ENCODE measurements at regions of chr1 and their contacts with region 1.

Region 1: GRCh38 chr1:209899948-209900347 is 38.1 kb upstream of the SYT14 start:
- DNase-seq: no peak
- H3K4me3 ChIP-seq: no peak overlapping the region
- H3K27ac ChIP-seq: peak overlapping the region; percentile 84
- H3K4me1 ChIP-seq: peaks cover 44% of the 10 kb centered on the region
- H3K27me3 ChIP-seq: no peaks in the 10 kb centered on the region
- CTCF ChIP-seq: peak; percentile 48; the same call in 1 of the 2 replicates

Region 2: DNA sequence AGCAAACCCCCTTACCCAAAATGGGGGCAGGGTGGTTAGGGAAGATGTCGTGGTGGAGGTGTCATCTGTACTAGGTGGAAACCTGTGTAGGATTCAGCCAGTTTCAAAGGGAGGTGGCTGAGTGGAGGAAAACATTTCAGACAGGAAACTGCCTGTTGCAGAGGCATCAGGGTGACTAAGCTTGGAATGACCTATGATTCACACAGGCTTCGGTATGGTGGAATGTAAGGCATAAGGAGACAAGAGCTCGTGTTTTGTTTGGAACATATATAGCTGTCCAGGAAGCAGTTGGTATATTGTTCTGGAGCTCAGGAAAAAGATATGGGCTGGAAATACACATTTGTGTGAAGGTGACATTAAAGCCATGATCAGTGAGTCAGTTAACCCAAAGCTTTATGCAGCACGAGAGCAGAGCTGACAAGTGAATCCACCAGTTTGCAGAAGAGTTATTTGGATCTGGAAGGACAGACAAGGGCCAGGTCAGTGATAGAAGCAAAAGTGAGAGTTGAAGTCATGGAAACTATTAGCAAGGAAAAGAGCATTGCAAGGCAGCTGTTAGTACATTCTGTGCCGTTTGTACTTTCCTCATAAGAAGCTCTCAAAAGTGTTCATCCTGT is 60.0 kb before region 1 on chr1:
- CTCF ChIA-PET with region 1: no interaction called
- POLR2A ChIA-PET with region 1: no interaction called
- intact Hi-C with region 1: loop called (anchors 1 kb)
- DNase-seq: peak; percentile 60 to 92
- H3K4me3 ChIP-seq: peak overlapping the region; percentile 34; the same call in 1 of the 2 replicates
- H3K27ac ChIP-seq: peak overlapping the region; percentile 91
- H3K4me1 ChIP-seq: peaks cover 26% of the 10 kb centered on the region
- H3K27me3 ChIP-seq: no peaks in the 10 kb centered on the region
- CTCF ChIP-seq: no peak

Region 3: DNA sequence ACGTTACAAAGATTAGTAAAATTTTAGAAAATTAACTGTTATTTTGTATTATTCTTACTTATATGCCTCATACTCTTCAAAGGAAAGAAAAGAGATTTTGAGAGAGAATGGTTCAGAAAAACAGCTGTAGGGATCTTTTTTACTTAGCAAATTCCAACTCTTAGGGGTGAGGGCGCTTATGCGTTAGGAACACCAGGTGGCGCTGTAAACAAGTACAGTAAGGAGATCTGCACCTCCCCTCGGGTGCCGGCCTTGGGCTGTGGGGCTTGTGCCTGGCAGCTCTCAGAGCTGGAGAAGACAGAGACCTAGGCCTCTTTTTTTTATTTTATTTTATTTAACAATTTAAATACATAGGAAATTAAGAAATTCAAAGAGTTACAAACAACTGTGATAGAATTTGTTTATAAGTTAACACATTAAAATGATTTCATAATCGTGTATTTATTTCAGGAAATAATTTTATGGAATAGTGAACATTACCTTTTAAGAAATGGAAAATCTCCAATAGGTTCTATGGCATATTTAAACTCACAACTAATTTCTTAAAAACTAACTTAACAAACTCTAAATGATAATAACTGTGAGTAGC is 39.6 kb before region 1 on chr1:
- CTCF ChIA-PET with region 1: interaction called, 3 read pairs
- POLR2A ChIA-PET with region 1: interaction called, 5 read pairs
- intact Hi-C with region 1: loop called (anchors 5 kb)
- DNase-seq: peak; percentile 58 to 69
- H3K4me3 ChIP-seq: no peak overlapping the region
- H3K27ac ChIP-seq: no peak overlapping the region
- H3K4me1 ChIP-seq: peaks cover 11% of the 10 kb centered on the region
- H3K27me3 ChIP-seq: no peaks in the 10 kb centered on the region
- CTCF ChIP-seq: peak; percentile 94

Region 4: GRCh38 chr1:209873067-209873799 is 26.7 kb before region 1 on chr1:
- CTCF ChIA-PET with region 1: no interaction called
- POLR2A ChIA-PET with region 1: no interaction called
- intact Hi-C with region 1: loop called (anchors 2 kb)
- DNase-seq: peak; percentile 18 to 72
- H3K4me3 ChIP-seq: no peak overlapping the region
- H3K27ac ChIP-seq: peak overlapping the region; percentile 66
- H3K4me1 ChIP-seq: peaks cover 21% of the 10 kb centered on the region
- H3K27me3 ChIP-seq: no peaks in the 10 kb centered on the region
- CTCF ChIP-seq: no peak

Region 5: GRCh38 chr1:209884665-209885117 is 15.3 kb before region 1 on chr1:
- CTCF ChIA-PET with region 1: interaction called, 3 read pairs
- POLR2A ChIA-PET with region 1: interaction called, 8 read pairs
- intact Hi-C with region 1: loop called (anchors 1 kb)
- DNase-seq: peak; percentile 85 to 87
- H3K4me3 ChIP-seq: no peak overlapping the region
- H3K27ac ChIP-seq: peak overlapping the region; percentile 68
- H3K4me1 ChIP-seq: peaks cover 20% of the 10 kb centered on the region
- H3K27me3 ChIP-seq: no peaks in the 10 kb centered on the region
- CTCF ChIP-seq: no peak

Region 6: DNA sequence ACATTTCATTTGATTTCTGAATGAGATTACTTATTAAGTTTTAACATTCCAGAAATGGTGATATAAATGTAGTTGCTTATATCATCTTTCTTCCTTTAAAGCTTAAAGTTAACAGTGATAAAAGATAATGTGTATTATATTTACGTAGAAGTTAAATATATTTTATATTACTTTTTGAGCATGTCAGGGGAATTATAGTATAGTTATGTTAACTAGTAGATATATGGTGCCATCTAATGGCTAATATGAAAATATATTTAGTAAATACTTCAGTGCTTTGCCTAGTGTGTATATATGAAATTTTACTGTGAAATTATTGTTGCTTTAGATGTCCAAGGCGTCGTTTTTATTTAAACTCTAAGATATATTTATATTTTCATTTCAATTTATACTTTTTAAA is 89.6 kb after region 1 on chr1:
- CTCF ChIA-PET with region 1: interaction called, 4 read pairs
- POLR2A ChIA-PET with region 1: no interaction called
- intact Hi-C with region 1: loop called (anchors 2 kb)
- DNase-seq: no peak
- H3K4me3 ChIP-seq: no peak overlapping the region
- H3K27ac ChIP-seq: peak overlapping the region; percentile 63
- H3K4me1 ChIP-seq: peaks cover 15% of the 10 kb centered on the region
- H3K27me3 ChIP-seq: no peaks in the 10 kb centered on the region
- CTCF ChIP-seq: peak; percentile 69; the same call in 1 of the 2 replicates

Region 7: DNA sequence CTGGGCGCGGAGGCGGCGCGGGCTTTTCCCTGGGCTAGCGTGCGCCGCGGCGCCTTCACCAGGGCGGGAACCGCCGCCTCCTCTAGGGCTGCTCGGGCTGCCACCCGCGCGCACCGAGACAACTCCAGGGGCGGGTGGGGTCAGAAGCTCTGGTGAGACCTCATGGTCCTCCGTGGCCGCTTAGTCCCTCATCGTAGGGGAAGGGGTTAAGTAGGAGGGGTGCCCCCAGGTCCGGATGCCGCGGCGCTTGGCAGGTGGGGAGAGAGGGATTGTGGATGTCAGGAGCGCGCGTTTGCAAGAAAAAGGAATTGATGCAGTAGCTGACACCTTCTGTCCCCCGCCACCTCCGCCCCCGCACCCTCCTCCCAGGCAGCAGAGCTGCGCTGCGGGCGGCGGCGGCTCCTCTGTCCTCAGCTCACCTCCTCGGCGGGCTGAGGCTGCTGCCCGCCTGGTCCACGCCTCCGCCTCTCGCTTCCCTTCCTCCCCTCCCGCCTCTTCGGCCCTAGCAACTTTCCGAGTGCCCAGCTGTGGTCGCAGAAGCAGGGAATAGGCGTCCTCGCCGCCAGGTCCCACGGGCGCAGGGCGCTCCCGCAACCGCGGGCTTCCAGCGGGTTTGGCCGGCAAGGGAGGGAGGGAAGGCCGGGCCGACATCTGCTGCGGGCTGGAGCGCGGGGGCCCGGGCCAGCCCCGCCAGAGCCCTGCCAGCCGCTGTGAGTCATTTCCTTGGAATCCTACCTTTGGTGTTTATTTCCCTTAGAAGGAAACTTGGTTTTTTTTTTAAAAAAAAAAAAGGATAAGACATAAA is 333.5 kb after region 1 on chr1:
- CTCF ChIA-PET with region 1: no interaction called
- POLR2A ChIA-PET with region 1: no interaction called
- intact Hi-C with region 1: loop called (anchors 10 kb)
- DNase-seq: peak; percentile 75 to 77
- H3K4me3 ChIP-seq: peak overlapping the region; percentile 96
- H3K27ac ChIP-seq: peak overlapping the region; percentile 41
- H3K4me1 ChIP-seq: peaks cover 31% of the 10 kb centered on the region
- H3K27me3 ChIP-seq: no peaks in the 10 kb centered on the region
- CTCF ChIP-seq: no peak